ENCODE measurements at regions of chr4 and their contacts with region 1.

Region 1: DNA sequence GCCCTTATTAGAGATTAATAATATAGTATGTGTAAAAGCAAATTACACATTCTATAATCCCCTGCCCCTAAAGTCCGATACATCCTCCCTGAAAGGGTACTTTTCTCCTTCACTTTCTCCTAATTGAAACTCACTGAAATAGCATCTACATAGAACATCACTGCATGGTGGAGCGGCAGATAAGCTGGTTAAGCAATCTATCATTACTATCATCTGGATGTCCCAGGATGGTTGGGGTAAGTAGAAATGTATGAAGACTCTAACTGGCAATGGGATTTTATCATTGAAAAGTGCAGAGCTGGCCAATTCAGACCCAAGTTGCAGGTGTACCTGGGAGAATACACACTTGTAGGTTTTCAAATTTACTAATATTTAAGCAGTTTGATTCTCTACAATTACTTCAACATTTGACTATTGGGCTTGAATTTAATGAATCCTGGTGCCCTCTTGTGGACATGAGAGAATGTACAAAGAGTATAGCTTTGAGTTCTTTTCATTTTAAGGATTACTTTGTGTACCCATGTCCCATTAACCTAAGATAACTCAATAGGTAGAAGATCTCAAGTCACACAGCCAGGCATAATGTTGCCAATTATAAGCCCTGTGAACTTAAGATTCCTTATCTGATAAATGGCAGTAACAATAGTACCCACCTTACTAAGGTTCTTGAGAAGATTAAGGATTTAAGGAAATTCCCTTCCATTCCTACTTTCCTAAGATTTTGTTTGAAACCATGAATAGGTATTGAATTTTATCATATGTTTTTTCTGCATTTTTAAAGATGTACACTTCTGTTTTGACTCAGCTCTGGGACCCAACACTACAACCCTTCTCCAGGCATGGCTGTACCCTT is 69.8 kb downstream of the SHROOM3 start:
- DNase-seq: no peak
- ATAC-seq: peak; percentile 45
- H3K4me3 Mint-ChIP-seq: no peak overlapping the region
- H3K27ac Mint-ChIP-seq: no peak overlapping the region
- H3K4me1 Mint-ChIP-seq: no peaks in the 10 kb centered on the region
- H3K27me3 Mint-ChIP-seq: peaks cover 12% of the 10 kb centered on the region
- CTCF ChIP-seq: peak; percentile 75

Region 2: GRCh38 chr4:76492055-76492454 is 12.8 kb before region 1 on chr4:
- CTCF ChIA-PET with region 1: interaction called, 11 read pairs
- POLR2A ChIA-PET with region 1: no interaction called
- intact Hi-C with region 1: no loop called
- DNase-seq: no peak
- ATAC-seq: no peak
- H3K4me3 Mint-ChIP-seq: no peak overlapping the region
- H3K27ac Mint-ChIP-seq: no peak overlapping the region
- H3K4me1 Mint-ChIP-seq: peaks cover 4% of the 10 kb centered on the region
- H3K27me3 Mint-ChIP-seq: peaks cover 2% of the 10 kb centered on the region
- CTCF ChIP-seq: no peak

Measured in activated CD8-positive, alpha-beta T cell treated with anti-CD3 and anti-CD28 coated beads for 36 hours (primary cell).